ENCODE measurements at regions of chr18 and their contacts with region 1.

Region 1: DNA sequence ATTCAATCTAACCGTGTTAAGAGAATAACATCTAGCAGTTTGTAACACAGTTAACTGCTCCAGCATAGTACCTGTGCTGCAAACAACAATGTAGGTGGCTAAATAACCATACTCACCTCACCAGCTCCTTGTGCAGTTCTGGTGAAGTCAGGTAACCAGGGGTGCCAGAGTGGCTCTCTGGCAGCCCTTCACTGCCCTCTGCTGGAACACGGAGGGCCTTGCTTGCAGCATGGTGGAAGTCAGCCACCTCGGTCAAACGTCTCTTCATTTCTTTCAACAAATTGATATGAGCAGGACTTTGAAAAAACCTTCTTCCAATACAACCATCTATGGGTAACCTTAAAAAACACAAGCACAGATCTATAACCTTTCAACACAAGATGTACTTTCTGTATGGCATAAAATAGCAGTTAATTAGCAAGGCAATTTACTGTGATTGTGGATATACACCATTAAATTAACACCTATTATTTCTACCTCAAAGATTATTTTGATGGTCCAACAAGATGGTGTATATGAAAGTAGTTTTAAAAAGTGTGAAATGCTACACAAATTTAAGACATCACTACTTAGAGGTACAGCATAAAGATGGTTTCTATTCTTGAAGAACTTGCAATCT is 56.6 kb downstream of the EPG5 start:
- DNase-seq: peak in 1 of 2 donors; percentile 61
- ATAC-seq: no peak
- H3K4me3 ChIP-seq: no peak overlapping the region
- H3K27ac ChIP-seq: no peak overlapping the region
- H3K4me1 ChIP-seq: no peaks in the 10 kb centered on the region
- H3K27me3 ChIP-seq: no peaks in the 10 kb centered on the region

Region 2: DNA sequence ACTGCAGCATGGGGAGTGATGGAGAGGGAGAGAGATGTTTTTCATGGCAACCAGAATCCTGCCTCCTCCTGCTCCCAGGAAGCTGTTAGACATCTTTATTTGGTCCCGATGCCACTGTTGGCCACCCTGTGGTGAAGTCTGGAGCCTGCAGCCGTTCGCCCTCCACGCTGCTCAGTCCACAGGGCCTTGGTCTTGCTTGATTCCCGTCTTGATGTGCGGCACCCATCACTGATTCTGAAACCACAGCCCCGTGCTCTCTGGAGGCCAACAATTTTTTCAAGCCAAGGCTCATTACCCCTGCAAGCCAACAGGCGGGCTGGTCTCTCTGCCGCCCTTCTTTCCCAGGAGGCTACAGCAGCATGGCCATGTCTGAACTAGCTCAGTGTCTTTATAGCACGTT is 60.5 kb before region 1 on chr18:
- intact Hi-C with region 1: no loop called
- DNase-seq: no peak
- ATAC-seq: no peak
- H3K4me3 ChIP-seq: no peak overlapping the region
- H3K27ac ChIP-seq: no peak overlapping the region
- H3K4me1 ChIP-seq: no peaks in the 10 kb centered on the region
- H3K27me3 ChIP-seq: no peaks in the 10 kb centered on the region

Region 3: GRCh38 chr18:45967007-45967706 is 56.6 kb after region 1 on chr18 and contains the start of gene EPG5:
- intact Hi-C with region 1: loop called in 1 of 2 experiments (anchors 10 kb)
- DNase-seq: peak; percentile 97 to 98
- ATAC-seq: peak; percentile 99
- H3K4me3 ChIP-seq: peak within 1 kb of the TSS; percentile 91 to 96
- H3K27ac ChIP-seq: peak within 1 kb of the TSS in 1 of 2 donors; percentile 24
- H3K4me1 ChIP-seq: no peaks in the 10 kb centered on the region
- H3K27me3 ChIP-seq: no peaks in the 10 kb centered on the region
- total RNA-seq, gene EPG5: 28.4 to 37.3 TPM